HCT116 (cell line): ENCODE measurements at regions of chr6 and their contacts with region 1.

Region 1: GRCh38 chr6:135075018-135075417 is 20.4 kb upstream of the HBS1L start:
- DNase-seq: no peak
- ATAC-seq: peak; percentile 62
- H3K4me3 ChIP-seq: no peak overlapping the region
- H3K27ac ChIP-seq: no peak overlapping the region
- H3K4me1 ChIP-seq: no peaks in the 10 kb centered on the region
- H3K27me3 ChIP-seq: no peaks in the 10 kb centered on the region
- CTCF ChIP-seq: peak in 1 of 3 experiments; percentile 35; a peak in 1 of 6 replicates
- POLR2A ChIP-seq: no peak
- RAD21 ChIP-seq: no peak

Region 2: DNA sequence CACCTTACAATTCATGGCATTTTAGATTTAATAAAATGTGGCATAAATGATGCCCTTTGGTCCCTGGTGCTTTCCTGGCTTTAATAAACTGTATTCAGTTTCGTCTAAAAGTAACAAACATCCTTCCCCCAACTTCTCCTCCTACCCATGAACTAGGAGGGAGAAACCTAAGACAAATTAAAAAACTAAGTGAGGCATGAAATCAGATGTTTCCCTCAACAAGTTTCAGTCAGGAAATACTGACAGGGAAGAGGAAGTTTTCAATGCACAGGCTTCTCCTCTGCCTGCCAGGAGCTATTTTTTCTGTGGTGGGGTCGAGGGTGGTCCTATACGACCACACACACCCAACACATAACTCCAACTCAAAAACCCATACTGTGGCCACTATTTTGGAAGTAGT is 30.4 kb before region 1 on chr6:
- CTCF ChIA-PET with region 1: no interaction called
- POLR2A ChIA-PET with region 1: no interaction called
- RAD21 ChIA-PET with region 1: no interaction called
- intact Hi-C with region 1: loop called (anchors 1 kb)
- DNase-seq: no peak
- ATAC-seq: no peak
- H3K4me3 ChIP-seq: no peak overlapping the region
- H3K27ac ChIP-seq: no peak overlapping the region
- H3K4me1 ChIP-seq: no peaks in the 10 kb centered on the region
- H3K27me3 ChIP-seq: no peaks in the 10 kb centered on the region
- CTCF ChIP-seq: no peak
- POLR2A ChIP-seq: no peak
- RAD21 ChIP-seq: no peak

Region 3: DNA sequence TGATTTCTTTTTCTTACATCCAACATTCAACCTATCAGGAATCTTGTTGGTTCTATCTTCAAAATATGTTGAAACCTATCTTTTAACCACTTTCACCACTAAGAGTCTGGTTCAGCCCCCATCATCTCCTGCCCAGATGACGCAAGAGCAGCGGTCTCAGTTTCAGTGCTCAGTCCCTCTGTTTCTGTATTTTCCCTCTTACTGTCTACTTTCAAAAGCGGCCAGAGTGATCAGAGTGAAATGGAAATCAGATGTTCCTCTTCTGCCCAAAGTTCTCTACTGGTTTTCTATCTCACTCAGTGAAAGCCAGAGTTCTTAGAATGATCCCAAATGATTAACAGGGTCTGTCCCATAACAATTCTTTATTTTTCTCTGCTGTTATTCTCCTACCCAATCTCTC is 628.6 kb after region 1 on chr6:
- CTCF ChIA-PET with region 1: no interaction called
- POLR2A ChIA-PET with region 1: no interaction called
- RAD21 ChIA-PET with region 1: no interaction called
- intact Hi-C with region 1: no loop called
- DNase-seq: no peak
- ATAC-seq: no peak
- H3K4me3 ChIP-seq: no peak overlapping the region
- H3K27ac ChIP-seq: no peak overlapping the region
- H3K4me1 ChIP-seq: no peaks in the 10 kb centered on the region
- H3K27me3 ChIP-seq: no peaks in the 10 kb centered on the region
- CTCF ChIP-seq: no peak
- POLR2A ChIP-seq: no peak
- RAD21 ChIP-seq: no peak